PC-3 (cell line): ENCODE measurements at regions of chr21 and their contacts with region 1.

Region 1: GRCh38 chr21:35051287-35051818 is 2.3 kb upstream of the RUNX1 start:
- DNase-seq: peak; percentile 97
- ATAC-seq: peak; percentile 59
- H3K4me3 ChIP-seq: peak overlapping the region; percentile 23; the same call in 1 of the 2 replicates
- H3K27ac ChIP-seq: peak overlapping the region; percentile 91
- H3K4me1 ChIP-seq: peaks cover 46% of the 10 kb centered on the region
- H3K27me3 ChIP-seq: no peaks in the 10 kb centered on the region
- CTCF ChIP-seq: peak; percentile 88

Region 2: GRCh38 chr21:34795175-34795547 is 256.2 kb before region 1 on chr21:
- CTCF ChIA-PET with region 1: no interaction called
- POLR2A ChIA-PET with region 1: no interaction called
- intact Hi-C with region 1: loop called (anchors 5 kb)
- DNase-seq: no peak
- ATAC-seq: peak; percentile 4; the same call in 1 of the 2 replicates
- H3K4me3 ChIP-seq: no peak overlapping the region
- H3K27ac ChIP-seq: peak overlapping the region; percentile 89
- H3K4me1 ChIP-seq: peaks cover 46% of the 10 kb centered on the region
- H3K27me3 ChIP-seq: no peaks in the 10 kb centered on the region
- CTCF ChIP-seq: peak; percentile 39

Region 3: DNA sequence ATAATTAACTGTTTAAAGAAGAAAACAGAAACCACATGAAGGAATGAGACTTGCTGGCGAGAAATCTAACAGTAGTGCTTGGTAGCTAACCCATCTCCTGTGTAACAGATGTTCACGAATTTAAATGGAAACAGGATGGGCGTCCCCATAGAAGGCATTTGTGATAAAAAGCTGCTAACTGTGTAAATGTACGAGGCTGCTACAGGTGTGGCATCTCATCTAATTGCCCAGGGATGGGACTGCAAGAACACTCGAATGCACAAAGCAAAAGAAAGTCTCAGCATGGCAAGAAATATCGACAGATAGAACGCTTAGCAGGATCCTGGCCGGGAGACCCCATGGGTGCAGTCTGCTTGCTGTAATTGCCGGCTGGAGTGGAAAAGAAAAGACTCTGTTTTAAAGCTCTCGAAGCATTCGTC is 115.0 kb before region 1 on chr21:
- CTCF ChIA-PET with region 1: no interaction called
- POLR2A ChIA-PET with region 1: no interaction called
- intact Hi-C with region 1: loop called (anchors 1 kb)
- DNase-seq: no peak
- ATAC-seq: peak; percentile 25; the same call in 1 of the 2 replicates
- H3K4me3 ChIP-seq: no peak overlapping the region
- H3K27ac ChIP-seq: peak overlapping the region; percentile 15
- H3K4me1 ChIP-seq: peaks cover 43% of the 10 kb centered on the region
- H3K27me3 ChIP-seq: no peaks in the 10 kb centered on the region
- CTCF ChIP-seq: no peak

Region 4: DNA sequence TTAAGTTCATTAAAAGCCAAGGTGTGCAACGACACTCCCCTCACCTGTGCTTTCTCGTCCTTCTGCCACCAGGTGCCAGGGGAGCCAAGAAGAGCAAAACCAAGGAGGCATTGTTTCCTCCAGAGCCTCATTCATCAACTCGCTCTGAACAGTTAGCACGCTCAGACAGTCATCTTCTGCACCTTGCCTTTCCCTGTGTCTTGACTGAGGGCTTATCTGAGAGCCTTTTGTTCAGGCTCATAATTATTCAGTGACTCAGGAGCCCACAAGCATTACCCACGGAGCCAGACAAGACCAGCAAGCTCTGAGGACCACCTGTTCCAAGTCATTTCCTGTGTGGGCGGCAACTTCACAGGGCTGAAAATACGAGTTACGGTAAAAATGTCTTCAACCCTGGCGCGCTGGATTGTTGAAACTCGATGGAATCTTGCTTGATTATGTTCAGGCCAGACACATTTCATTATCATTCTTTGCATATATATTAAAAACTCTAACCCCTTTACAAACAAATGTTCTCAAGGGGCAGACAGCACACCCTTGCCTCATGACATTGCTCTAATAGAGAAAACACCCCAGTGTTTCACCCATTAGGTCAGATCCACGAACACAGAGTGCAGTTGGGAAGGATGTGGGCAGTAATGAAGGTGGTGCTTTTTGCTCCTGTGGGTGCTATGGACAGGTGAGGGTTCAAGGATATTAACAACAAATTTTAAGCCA is 87.5 kb after region 1 on chr21:
- CTCF ChIA-PET with region 1: interaction called, 5 read pairs
- POLR2A ChIA-PET with region 1: interaction called, 3 read pairs
- intact Hi-C with region 1: loop called (anchors 2 kb)
- DNase-seq: peak; percentile 94
- ATAC-seq: peak; percentile 58
- H3K4me3 ChIP-seq: peak overlapping the region; percentile 16; the same call in 1 of the 2 replicates
- H3K27ac ChIP-seq: peak overlapping the region; percentile 87
- H3K4me1 ChIP-seq: peaks cover 42% of the 10 kb centered on the region
- H3K27me3 ChIP-seq: no peaks in the 10 kb centered on the region
- CTCF ChIP-seq: no peak; the same call in 1 of the 2 replicates

Region 5: DNA sequence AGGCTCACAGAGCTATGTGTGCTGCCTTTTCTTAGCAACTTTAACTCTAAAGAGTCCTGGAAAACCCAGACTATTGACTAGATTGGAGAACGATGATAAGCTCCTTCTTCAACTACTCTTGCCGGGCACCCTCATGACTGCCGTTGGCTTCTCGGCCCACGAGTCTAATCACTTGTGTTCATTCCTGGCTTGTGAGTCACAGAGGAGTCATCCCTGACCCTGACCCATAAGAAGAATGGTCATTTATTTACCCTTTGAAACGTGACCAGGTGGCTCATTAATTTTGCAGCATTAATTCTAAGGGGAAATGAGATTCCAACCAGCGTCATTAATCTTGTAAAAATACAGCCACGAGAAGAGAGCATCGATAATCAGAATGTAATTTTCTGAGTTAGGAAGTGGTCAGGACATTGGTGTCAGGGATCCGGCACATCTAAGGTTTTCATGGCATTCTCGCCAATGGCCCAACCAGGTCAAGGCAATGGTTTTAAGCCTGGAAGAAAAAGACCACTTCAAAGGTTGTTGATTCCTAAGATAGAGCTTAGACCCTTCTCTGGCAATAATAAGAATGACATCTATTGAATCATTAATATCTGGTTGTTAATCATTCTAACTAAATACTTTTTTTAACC is 181.3 kb after region 1 on chr21:
- CTCF ChIA-PET with region 1: interaction called, 3 read pairs
- POLR2A ChIA-PET with region 1: interaction called, 4 read pairs
- intact Hi-C with region 1: loop called (anchors 1 kb)
- DNase-seq: peak; percentile 91
- ATAC-seq: peak; percentile 95
- H3K4me3 ChIP-seq: peak overlapping the region; percentile 1; the same call in 1 of the 2 replicates
- H3K27ac ChIP-seq: peak overlapping the region; percentile 40
- H3K4me1 ChIP-seq: peaks cover 25% of the 10 kb centered on the region
- H3K27me3 ChIP-seq: no peaks in the 10 kb centered on the region
- CTCF ChIP-seq: no peak

Region 6: GRCh38 chr21:35510957-35511695 is 459.8 kb after region 1 on chr21:
- CTCF ChIA-PET with region 1: no interaction called
- POLR2A ChIA-PET with region 1: interaction called, 6 read pairs
- intact Hi-C with region 1: loop called (anchors 5 kb)
- DNase-seq: peak; percentile 89
- ATAC-seq: peak; percentile 87
- H3K4me3 ChIP-seq: peak overlapping the region; percentile 20; the same call in 1 of the 2 replicates
- H3K27ac ChIP-seq: peak overlapping the region; percentile 95
- H3K4me1 ChIP-seq: peaks cover 40% of the 10 kb centered on the region
- H3K27me3 ChIP-seq: no peaks in the 10 kb centered on the region
- CTCF ChIP-seq: no peak

Region 7: DNA sequence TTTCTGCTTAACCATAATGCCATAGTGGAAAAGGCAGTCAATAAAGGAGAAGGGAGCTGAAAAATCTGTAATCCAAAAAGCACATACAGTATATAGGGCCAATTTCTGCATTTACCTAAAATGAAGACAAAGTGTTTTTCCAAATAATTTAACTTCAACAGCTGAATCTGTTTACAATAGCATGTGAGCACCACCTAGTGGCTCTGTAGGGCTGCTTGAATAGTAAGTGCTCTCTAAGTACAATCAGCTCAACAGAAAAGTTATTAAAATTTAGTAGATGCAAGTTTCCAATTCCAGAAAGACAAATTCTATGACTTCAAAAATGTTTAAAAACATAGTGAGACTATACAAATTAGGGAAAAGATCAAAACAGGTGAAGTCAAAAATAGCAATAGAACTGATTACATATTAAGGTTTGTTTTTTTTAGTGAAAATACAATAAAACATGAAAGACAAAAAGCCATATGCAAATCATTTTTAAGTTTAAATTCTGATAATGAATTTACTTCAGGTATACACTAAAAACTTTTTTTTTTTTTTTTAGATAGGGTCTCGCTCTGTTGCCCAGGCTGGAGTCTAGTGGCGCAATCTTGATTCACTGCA is 788.9 kb after region 1 on chr21:
- CTCF ChIA-PET with region 1: interaction called, 3 read pairs
- POLR2A ChIA-PET with region 1: no interaction called
- intact Hi-C with region 1: loop called (anchors 2 kb)
- DNase-seq: peak; percentile 82
- ATAC-seq: peak; percentile 81
- H3K4me3 ChIP-seq: no peak overlapping the region
- H3K27ac ChIP-seq: no peak overlapping the region
- H3K4me1 ChIP-seq: no peaks in the 10 kb centered on the region
- H3K27me3 ChIP-seq: no peaks in the 10 kb centered on the region
- CTCF ChIP-seq: peak; percentile 98